RWPE1 (cell line): ENCODE measurements at regions of chr12 and their contacts with region 1.

Region 1: DNA sequence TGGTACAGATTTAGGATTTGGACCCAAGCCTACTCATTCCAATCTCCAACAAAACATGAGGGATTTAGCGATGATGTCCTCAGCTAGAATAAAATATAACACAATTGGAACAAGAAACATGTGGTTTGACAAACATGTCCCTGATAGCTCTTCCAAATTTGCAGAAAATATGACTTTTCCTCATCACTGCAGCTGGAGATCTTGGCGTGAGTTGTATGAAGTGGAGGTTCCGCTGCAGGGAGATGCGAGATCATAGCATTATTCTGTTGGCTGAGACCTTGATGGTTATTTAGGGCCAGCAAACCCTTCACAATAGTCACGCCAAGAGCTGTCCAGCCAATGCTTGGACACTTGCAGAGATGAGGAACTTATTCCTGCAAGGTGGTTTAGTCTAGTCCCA is 413.4 kb upstream of the TBX3 start:
- DNase-seq: no peak
- H3K27ac ChIP-seq: no peak overlapping the region
- CTCF ChIP-seq: no peak

Region 2: DNA sequence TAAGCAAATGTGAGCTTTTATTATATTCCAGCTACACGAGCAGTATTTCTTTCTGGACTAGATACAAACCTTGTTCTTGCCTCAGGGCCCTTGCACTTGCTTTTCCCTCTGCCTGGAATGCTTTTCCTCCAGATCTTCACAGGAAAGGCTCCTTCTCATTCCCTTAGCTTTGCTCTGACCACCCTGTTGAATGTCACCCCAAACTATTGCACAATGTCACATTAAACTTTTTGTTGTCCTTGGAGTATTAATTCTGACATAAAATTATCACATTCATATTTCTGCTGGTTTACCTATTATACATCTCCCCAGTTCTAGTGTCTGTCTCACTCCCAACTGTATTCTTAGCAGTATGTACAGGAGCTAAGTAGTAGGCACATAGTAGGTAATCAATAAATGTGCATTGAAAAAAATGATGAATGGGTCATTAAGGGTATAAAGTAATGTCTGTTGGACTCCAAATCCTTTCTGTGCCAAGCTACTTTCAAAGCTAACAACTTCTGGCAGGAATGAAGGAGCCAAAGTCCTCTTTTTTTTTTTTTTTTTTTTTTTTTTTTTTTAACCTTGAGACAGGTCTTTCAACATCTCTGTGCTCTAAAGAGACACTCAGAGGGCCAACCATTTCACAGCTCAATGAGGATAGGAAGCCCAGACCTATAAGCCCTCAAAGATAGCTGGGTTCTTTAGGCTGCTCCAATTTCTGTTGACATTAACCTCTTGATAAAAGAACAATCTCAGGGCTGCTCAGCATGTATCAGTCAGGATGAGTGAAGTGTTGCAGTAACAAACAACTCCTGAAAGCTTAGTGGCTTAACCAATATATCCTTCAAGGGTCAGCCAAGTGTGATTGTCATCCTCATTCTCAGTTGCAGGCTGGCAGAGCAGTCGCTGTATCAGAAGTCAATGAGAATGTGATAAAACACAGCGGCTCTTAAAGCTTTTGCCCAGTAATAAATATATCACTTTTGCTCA is 11.0 kb after region 1 on chr12:
- CTCF ChIA-PET with region 1: interaction called, 11 read pairs
- POLR2A ChIA-PET with region 1: no interaction called
- DNase-seq: no peak
- H3K27ac ChIP-seq: no peak overlapping the region
- CTCF ChIP-seq: no peak